ENCODE measurements at regions of chr6 and their contacts with region 1.

Region 1: DNA sequence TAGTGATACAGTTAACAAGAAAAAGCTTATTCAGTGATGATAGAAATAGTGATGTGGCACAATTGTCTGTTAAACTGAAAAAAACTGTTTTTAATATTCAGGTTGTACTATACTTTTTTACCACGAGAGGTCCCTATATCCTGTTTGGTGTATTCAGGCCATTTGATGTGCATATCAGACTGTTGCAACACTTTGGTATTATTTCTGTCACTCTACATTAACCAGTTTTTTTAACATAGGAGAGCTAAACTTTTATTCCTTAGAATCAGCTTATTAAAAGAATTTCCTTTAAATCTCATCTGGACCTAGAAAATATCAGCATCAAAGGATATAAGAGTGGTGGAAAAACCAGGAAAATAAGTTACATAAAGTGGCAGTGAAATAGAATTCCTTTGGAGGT is 36.8 kb downstream of the TSPYL4 start:
- DNase-seq: no peak
- ATAC-seq: peak; percentile 36
- H3K4me3 Mint-ChIP-seq: no peak overlapping the region
- H3K27ac Mint-ChIP-seq: no peak overlapping the region
- H3K4me1 Mint-ChIP-seq: no peaks in the 10 kb centered on the region
- H3K27me3 Mint-ChIP-seq: no peaks in the 10 kb centered on the region

Region 2: DNA sequence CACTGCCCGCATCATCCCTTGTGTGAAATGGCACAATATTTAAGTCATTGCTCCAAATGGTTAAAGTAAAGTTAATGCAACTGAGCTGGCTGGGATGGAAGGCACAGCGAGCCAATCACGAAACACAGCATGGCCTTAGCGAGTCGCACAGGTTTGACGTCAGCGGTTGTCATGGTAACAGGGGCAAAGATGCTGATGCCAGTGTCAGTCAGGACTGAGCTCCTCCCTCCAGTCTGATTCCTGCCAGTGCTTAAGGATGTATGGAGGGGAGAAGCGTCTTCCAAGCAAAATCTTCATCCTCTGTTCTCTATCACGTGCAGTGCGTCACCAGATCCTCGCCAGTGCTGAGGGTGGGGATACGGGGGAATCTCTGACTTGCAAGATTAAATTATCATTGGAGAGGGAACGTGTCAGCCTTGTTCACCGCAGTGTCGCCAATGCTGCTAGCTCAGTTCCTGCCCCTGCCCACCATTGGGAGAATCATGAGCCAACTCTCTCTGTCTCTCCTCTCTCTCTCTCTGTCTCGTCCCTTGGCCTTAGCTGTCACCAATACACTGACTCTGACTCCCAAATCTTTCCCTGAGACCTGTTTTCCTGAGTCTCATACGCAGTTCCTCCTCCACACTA is 12.3 kb after region 1 on chr6:
- CTCF ChIA-PET with region 1: interaction called, 19 read pairs
- POLR2A ChIA-PET with region 1: no interaction called
- DNase-seq: no peak
- ATAC-seq: no peak
- H3K4me3 Mint-ChIP-seq: no peak overlapping the region
- H3K27ac Mint-ChIP-seq: no peak overlapping the region
- H3K4me1 Mint-ChIP-seq: no peaks in the 10 kb centered on the region
- H3K27me3 Mint-ChIP-seq: no peaks in the 10 kb centered on the region

Region 3: DNA sequence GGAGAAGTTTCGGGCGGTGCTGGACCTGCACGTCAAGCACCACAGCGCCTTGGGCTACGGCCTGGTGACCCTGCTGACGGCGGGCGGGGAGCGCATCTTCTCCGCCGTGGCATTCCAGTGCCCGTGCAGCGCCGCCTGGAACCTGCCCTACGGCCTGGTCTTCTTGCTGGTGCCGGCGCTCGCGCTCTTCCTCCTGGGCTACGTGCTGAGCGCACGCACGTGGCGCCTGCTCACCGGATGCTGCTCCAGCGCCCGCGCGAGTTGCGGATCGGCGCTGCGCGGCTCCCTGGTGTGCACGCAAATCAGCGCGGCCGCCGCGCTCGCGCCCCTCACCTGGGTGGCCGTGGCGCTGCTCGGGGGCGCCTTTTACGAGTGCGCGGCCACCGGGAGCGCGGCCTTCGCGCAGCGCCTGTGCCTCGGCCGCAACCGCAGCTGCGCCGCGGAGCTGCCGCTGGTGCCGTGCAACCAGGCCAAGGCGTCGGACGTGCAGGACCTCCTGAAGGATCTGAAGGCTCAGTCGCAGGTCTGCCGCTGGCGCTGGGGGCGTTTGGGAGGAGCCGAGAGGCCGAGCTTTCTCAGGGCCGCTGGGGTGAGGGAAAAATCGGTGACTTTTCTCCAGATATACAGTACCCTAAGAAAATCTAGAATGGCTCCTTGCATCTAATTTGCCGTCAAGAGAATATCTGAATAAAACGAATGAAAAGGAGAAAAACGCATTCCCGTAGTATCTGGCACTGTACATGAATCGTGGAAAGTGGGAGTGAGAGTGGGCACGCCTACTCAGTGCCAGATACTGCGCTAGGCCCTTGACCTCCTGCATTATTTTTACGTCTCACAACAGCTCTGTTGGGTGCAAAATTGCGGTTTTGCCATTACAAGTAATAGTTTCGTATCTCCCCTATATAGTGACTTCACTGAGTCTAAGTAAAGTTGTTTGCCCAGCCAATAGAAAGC is 245.1 kb after region 1 on chr6:
- CTCF ChIA-PET with region 1: no interaction called
- POLR2A ChIA-PET with region 1: no interaction called
- DNase-seq: peak; percentile 76
- ATAC-seq: peak; percentile 95
- H3K4me3 Mint-ChIP-seq: peak overlapping the region; percentile 72
- H3K27ac Mint-ChIP-seq: peak overlapping the region; percentile 77
- H3K4me1 Mint-ChIP-seq: peaks cover 54% of the 10 kb centered on the region
- H3K27me3 Mint-ChIP-seq: peaks cover 16% of the 10 kb centered on the region

Measured in activated CD8-positive, alpha-beta T cell treated with anti-CD3 and anti-CD28 coated beads, Interleukin-2, amount 10 ng/mL, durations not matched to agents 7 days and 5 days (primary cell).